BJ (cell line): ENCODE measurements at regions of chr13 and their contacts with region 1.

Region 1: DNA sequence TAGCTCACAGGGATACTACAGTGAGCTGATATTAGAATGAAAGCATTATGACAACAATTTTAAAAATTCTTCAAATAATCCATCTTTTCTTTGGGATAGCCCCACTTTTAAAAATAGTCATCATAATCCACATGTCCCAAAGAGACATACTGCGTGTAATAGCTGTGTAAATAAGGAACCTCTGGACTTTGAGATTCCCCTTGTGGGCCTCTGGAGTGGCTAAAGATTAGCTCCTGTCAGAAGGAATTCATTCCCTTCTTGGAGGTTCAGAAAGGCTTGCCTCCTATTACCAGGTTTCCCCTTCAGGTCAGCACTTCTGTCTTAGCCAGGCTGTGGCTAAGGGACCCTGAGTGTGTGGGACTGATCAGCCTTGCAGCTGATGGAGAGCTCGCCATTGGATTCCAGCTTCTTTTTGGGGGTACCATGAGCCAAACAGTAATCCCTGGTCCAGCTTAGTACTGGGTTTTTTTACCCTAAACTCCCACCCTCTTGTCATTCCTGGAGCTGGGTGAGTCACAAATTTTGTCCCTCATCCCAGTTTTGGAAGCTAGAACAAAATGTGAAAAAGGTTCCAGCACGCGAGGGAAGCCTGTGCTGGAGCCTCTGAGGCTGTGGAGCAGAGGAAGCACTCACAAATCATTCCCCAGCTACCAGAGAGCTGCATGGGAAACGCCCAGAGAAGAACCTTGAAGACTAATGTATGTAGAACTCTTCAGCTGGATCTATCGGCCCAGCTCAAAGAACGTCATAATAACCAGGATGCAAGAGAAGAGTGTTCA is 96.7 kb downstream of the RNASEH2B start:
- DNase-seq: no peak
- H3K4me3 ChIP-seq: no peak overlapping the region
- H3K27me3 ChIP-seq: peaks cover 3% of the 10 kb centered on the region
- CTCF ChIP-seq: no peak

Region 2: GRCh38 chr13:50969691-50970090 is 36.6 kb before region 1 on chr13:
- CTCF ChIA-PET with region 1: no interaction called
- POLR2A ChIA-PET with region 1: interaction called, 19 read pairs
- DNase-seq: no peak
- H3K4me3 ChIP-seq: no peak overlapping the region
- H3K27me3 ChIP-seq: no peaks in the 10 kb centered on the region
- CTCF ChIP-seq: no peak